PC-9 (cell line): ENCODE measurements at regions of chr6 and their contacts with region 1.

Region 1: DNA sequence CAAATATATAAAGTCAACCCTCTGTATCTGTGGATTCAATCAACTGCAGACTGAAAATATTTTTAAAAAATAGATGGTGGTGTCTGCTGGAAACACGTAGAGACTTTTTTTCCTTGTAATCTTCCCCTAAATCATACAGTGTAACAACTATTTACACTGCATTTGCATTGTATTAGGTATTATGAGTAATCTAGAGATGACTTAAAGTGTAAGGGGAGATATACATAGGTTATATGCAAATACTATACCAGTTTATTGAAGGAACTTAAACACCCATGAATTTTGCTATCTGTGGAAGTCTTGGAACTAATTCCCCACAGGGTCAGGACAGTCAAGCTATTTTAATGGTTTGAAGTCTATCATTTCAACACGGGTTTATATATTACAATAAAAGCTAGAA is 10.2 kb downstream of the HDAC2 start:
- DNase-seq: no peak
- H3K4me3 ChIP-seq: no peak overlapping the region
- H3K27ac ChIP-seq: no peak overlapping the region
- H3K4me1 ChIP-seq: no peaks in the 10 kb centered on the region
- H3K27me3 ChIP-seq: no peaks in the 10 kb centered on the region
- CTCF ChIP-seq: no peak

Region 2: DNA sequence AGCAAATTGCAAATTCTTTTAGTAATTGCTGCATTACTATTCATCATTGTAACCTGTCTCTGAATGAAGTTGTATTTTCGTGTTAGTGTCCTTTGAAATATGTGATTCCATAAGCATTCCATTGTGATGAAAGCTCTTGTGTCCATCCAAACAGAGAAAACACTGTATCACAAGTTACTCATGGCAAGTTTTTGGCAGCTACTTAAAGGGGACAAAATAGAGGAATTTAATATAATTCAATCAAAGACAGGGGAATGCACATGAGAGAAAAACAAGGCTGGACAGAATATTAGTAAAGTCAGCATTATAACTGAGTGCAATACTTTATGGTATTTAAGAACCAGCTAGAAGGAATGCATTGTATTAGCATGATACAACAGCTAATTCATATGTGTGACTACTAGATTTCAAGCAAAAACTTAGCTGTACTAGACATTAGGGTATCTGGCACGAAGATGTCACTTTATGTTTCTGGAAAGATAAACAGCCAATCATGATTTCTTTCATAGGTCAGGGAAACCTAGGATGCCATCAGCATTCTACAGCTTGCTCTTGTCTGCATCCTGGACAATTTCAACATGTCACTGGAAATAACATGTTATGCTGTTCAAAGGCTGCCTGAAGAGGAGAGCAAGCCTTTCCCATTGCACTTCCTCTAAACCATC is 374.2 kb before region 1 on chr6:
- CTCF ChIA-PET with region 1: no interaction called
- POLR2A ChIA-PET with region 1: no interaction called
- intact Hi-C with region 1: no loop called
- DNase-seq: no peak
- H3K4me3 ChIP-seq: no peak overlapping the region
- H3K27ac ChIP-seq: no peak overlapping the region
- H3K4me1 ChIP-seq: peaks cover 11% of the 10 kb centered on the region; the same call in 1 of the 2 replicates
- H3K27me3 ChIP-seq: no peaks in the 10 kb centered on the region
- CTCF ChIP-seq: no peak

Region 3: GRCh38 chr6:113879186-113880096 is 81.4 kb before region 1 on chr6:
- CTCF ChIA-PET with region 1: no interaction called
- POLR2A ChIA-PET with region 1: no interaction called
- intact Hi-C with region 1: no loop called
- DNase-seq: peak; percentile 54 to 77
- H3K4me3 ChIP-seq: no peak overlapping the region
- H3K27ac ChIP-seq: peak overlapping the region; percentile 49
- H3K4me1 ChIP-seq: peaks cover 10% of the 10 kb centered on the region
- H3K27me3 ChIP-seq: no peaks in the 10 kb centered on the region
- CTCF ChIP-seq: peak; percentile 85

Region 4: GRCh38 chr6:114020196-114020595 is 59.4 kb after region 1 on chr6:
- CTCF ChIA-PET with region 1: no interaction called
- POLR2A ChIA-PET with region 1: no interaction called
- intact Hi-C with region 1: no loop called
- DNase-seq: no peak
- H3K4me3 ChIP-seq: no peak overlapping the region
- H3K27ac ChIP-seq: no peak overlapping the region
- H3K4me1 ChIP-seq: peaks cover 3% of the 10 kb centered on the region
- H3K27me3 ChIP-seq: no peaks in the 10 kb centered on the region
- CTCF ChIP-seq: no peak

Region 5: GRCh38 chr6:114827135-114827534 is 866.3 kb after region 1 on chr6:
- CTCF ChIA-PET with region 1: no interaction called
- POLR2A ChIA-PET with region 1: interaction called, 23 read pairs
- intact Hi-C with region 1: no loop called
- DNase-seq: no peak
- H3K4me3 ChIP-seq: no peak overlapping the region
- H3K27ac ChIP-seq: no peak overlapping the region
- H3K4me1 ChIP-seq: no peaks in the 10 kb centered on the region
- H3K27me3 ChIP-seq: no peaks in the 10 kb centered on the region
- CTCF ChIP-seq: no peak